Activated naive CD8-positive, alpha-beta T cell treated with anti-CD3 and anti-CD28 coated beads, Interleukin-2, amount 10 ng/mL, durations not matched to agents 7 days and 5 days (primary cell): ENCODE measurements at regions of chr19 and their contacts with region 1.

Region 1: DNA sequence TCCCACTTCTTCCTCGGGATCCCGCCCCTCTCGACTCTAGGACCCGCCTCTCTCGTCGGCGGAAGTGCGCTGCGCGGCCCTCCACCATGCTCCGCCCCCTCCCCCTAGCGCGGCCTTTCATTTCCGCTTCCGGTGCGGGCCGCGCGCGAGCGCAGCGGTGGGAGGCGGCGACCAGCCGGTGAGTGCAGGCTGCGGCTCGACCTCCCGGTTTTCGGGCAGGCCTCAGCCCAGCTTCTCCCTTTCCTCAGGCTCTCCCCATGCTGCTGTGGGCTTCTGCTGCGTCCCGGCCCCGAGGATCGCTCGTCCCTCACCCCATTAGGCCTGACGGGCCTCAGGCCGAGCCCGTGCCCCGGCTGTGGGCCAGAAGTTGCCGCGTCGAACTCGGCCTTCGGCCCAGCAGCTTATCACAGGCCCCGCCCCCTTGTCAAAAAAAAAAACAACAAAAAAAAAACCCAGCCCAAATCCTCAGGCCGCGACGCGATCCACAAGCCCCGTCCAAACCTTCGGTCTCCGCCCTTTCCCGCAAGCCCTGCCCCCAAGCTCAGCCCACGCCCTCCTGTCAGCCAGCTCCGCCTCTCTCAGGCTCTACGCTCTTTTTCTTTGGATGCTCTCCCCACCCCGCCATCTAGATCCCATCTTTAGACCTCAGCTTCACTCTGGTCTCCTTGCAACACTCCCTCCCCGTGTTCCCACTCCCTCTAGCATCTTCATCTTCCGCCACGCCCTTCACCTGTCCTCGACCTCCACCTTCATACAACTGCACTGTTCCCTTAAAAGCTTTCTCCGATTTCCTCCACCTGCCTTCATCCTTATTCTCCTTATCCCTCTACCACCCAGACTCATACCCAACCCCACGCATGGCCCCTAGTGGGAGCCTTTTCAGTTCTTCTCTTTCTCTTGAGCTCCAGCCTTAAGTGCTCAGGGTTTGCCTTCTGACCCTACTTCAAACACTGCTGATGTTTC is at the start of gene CLASRP:
- DNase-seq: peak; percentile 93
- ATAC-seq: peak; percentile 92
- H3K4me3 Mint-ChIP-seq: peak within 1 kb of the TSS; percentile 96
- H3K27ac Mint-ChIP-seq: peak within 1 kb of the TSS; percentile 97
- H3K4me1 Mint-ChIP-seq: peaks cover 25% of the 10 kb centered on the region
- H3K27me3 Mint-ChIP-seq: no peaks in the 10 kb centered on the region
- total RNA-seq, gene CLASRP: 128 to 129 TPM

Region 2: GRCh38 chr19:45001087-45001739 is 38.0 kb before region 1 on chr19 and contains the start of gene RELB:
- POLR2A ChIA-PET with region 1: interaction called, 16 read pairs
- DNase-seq: peak; percentile 99
- ATAC-seq: peak; percentile 67
- H3K4me3 Mint-ChIP-seq: peak within 1 kb of the TSS; percentile 96
- H3K27ac Mint-ChIP-seq: peak within 1 kb of the TSS; percentile 99
- H3K4me1 Mint-ChIP-seq: peaks cover 5% of the 10 kb centered on the region
- H3K27me3 Mint-ChIP-seq: peaks cover 2% of the 10 kb centered on the region
- total RNA-seq, gene RELB: 20.8 to 24.2 TPM

Region 3: GRCh38 chr19:45027371-45027770 is 11.8 kb before region 1 on chr19:
- POLR2A ChIA-PET with region 1: interaction called, 10 read pairs
- DNase-seq: no peak
- ATAC-seq: no peak
- H3K4me3 Mint-ChIP-seq: no peak overlapping the region
- H3K27ac Mint-ChIP-seq: no peak overlapping the region
- H3K4me1 Mint-ChIP-seq: no peaks in the 10 kb centered on the region
- H3K27me3 Mint-ChIP-seq: no peaks in the 10 kb centered on the region

Region 4: GRCh38 chr19:45178262-45179071 is 139.3 kb after region 1 on chr19 and contains the start of gene BLOC1S3:
- POLR2A ChIA-PET with region 1: interaction called, 17 read pairs
- DNase-seq: peak; percentile 99
- ATAC-seq: peak; percentile 89
- H3K4me3 Mint-ChIP-seq: peak within 1 kb of the TSS; percentile 95
- H3K27ac Mint-ChIP-seq: peak within 1 kb of the TSS; percentile 94
- H3K4me1 Mint-ChIP-seq: peaks cover 35% of the 10 kb centered on the region
- H3K27me3 Mint-ChIP-seq: no peaks in the 10 kb centered on the region
- total RNA-seq, gene BLOC1S3: 21.9 to 22.8 TPM